ENCODE measurements at regions of chr17 and their contacts with region 1.

Region 1: DNA sequence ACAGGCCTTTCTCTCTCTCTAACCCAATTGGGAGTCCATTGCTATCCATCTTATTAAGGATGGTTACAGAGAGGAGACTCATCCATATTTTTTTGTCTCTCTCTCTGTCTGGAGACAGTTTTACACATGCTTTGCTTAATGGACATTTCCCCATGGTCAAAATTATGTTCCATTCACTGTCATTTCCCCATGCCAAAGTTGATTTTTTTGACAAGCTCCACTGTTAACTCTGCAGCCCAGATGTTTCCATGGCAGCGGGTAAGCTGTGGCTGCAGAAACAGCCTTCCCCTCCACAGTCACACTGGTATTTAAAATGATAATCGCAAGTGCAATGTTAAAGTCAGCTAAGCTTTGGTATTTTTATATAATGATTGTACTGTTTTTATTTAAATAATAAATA is 63.9 kb upstream of the HLF start:
- DNase-seq: no peak
- ATAC-seq: no peak
- H3K4me3 ChIP-seq: no peak overlapping the region
- H3K27ac ChIP-seq: no peak overlapping the region
- H3K4me1 ChIP-seq: peaks cover 15% of the 10 kb centered on the region
- H3K27me3 ChIP-seq: no peaks in the 10 kb centered on the region
- CTCF ChIP-seq: no peak
- EP300 ChIP-seq: no peak
- POLR2A ChIP-seq: no peak
- RAD21 ChIP-seq: no peak

Region 2: DNA sequence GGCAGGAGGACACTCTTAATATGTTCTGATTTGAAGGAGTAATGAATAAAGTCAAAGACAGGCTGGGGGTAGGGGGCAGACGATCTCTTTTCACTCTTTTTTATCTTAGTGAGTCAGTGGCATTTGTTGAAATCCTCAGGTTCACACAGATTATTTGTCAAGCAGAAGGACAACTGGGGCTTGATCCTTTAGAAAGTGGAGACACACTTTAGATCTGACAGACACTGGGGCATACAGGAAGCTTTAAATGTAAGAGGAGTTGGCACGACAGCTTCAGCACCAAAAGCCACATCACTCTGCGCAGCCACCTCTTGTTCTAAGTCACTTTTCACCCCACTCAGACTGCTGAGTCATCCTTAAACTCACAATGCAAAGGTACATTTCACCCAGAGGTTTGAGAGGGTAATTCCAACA is 110.8 kb before region 1 on chr17:
- CTCF ChIA-PET with region 1: no interaction called
- POLR2A ChIA-PET with region 1: no interaction called
- in situ Hi-C with region 1: no loop called
- intact Hi-C with region 1: loop called (anchors 1 kb)
- DNase-seq: peak; percentile 18
- ATAC-seq: no peak; the same call in 2 of the 3 replicates
- H3K4me3 ChIP-seq: no peak overlapping the region
- H3K27ac ChIP-seq: no peak overlapping the region
- H3K4me1 ChIP-seq: peaks cover 8% of the 10 kb centered on the region; the same call in 1 of the 2 replicates
- H3K27me3 ChIP-seq: no peaks in the 10 kb centered on the region
- CTCF ChIP-seq: no peak
- EP300 ChIP-seq: no peak
- POLR2A ChIP-seq: no peak
- RAD21 ChIP-seq: no peak

Region 3: GRCh38 chr17:55237268-55237667 is 36.4 kb after region 1 on chr17:
- CTCF ChIA-PET with region 1: no interaction called
- POLR2A ChIA-PET with region 1: no interaction called
- in situ Hi-C with region 1: no loop called
- intact Hi-C with region 1: no loop called
- DNase-seq: no peak
- ATAC-seq: no peak
- H3K4me3 ChIP-seq: no peak overlapping the region
- H3K27ac ChIP-seq: no peak overlapping the region
- H3K4me1 ChIP-seq: peaks cover 23% of the 10 kb centered on the region
- H3K27me3 ChIP-seq: no peaks in the 10 kb centered on the region; a peak in 1 of 5 replicates
- CTCF ChIP-seq: no peak
- EP300 ChIP-seq: no peak
- POLR2A ChIP-seq: no peak
- RAD21 ChIP-seq: no peak